WTC11 (cell line): ENCODE measurements at regions of chr20 and their contacts with region 1.

Region 1: GRCh38 chr20:58850693-58851174 is at the start of gene GNAS-AS1:
- DNase-seq: peak; percentile 95
- ATAC-seq: peak; percentile 60
- H3K4me3 Mint-ChIP-seq: peak within 1 kb of the TSS; percentile 74
- H3K27ac Mint-ChIP-seq: peak within 1 kb of the TSS; percentile 94
- H3K4me1 Mint-ChIP-seq: peaks cover 72% of the 10 kb centered on the region
- H3K27me3 Mint-ChIP-seq: peaks cover 48% of the 10 kb centered on the region
- CTCF ChIP-seq: no peak; the same call in 1 of the 2 replicates
- total RNA-seq, gene GNAS-AS1: 12.2 to 13.4 TPM (median 12.8 TPM) in 3 replicates

Region 2: DNA sequence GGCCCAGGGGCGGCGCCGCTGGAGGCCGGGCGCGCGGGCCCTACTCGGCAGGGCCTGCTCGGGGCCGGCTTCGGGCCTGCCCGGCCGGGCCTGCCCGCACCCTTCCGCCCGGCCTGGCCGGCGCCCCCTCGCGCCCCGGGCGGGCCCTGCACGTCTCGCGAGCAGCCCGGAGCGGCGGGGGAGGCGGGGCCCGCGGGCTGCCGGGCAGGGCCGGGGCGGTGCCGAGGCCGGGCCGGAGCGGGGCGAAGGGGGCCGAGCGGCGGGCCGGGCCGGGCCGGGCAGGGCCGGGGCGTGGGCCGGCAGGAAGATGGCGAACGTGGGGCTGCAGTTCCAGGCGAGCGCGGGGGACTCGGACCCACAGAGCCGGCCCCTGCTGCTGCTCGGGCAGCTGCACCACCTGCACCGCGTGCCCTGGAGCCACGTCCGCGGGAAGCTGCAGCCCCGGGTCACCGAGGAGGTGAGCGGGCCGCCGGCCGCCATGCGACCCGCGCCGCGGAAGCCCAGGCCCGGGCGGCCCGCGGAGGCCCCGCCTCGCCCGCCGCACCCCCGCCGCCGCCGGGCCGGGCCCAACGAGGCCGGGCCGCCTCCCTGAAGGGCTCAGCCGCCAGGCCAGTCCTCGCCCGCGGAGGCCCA is 158.0 kb before region 1 on chr20 and contains the start of gene NPEPL1:
- CTCF ChIA-PET with region 1: interaction called, 10 read pairs
- POLR2A ChIA-PET with region 1: no interaction called
- DNase-seq: peak; percentile 58
- ATAC-seq: peak; percentile 79
- H3K4me3 Mint-ChIP-seq: peak within 1 kb of the TSS; percentile 58
- H3K27ac Mint-ChIP-seq: peak within 1 kb of the TSS; percentile 96
- H3K4me1 Mint-ChIP-seq: peaks cover 41% of the 10 kb centered on the region
- H3K27me3 Mint-ChIP-seq: no peaks in the 10 kb centered on the region
- CTCF ChIP-seq: no peak
- total RNA-seq, gene NPEPL1: 35.3 to 39.9 TPM (median 35.8 TPM) in 3 replicates

Region 3: GRCh38 chr20:58762120-58762519 is 88.6 kb before region 1 on chr20:
- CTCF ChIA-PET with region 1: no interaction called
- POLR2A ChIA-PET with region 1: no interaction called
- DNase-seq: no peak
- ATAC-seq: no peak
- H3K4me3 Mint-ChIP-seq: no peak overlapping the region
- H3K27ac Mint-ChIP-seq: no peak overlapping the region
- H3K4me1 Mint-ChIP-seq: no peaks in the 10 kb centered on the region
- H3K27me3 Mint-ChIP-seq: peaks cover 11% of the 10 kb centered on the region
- CTCF ChIP-seq: no peak

Region 4: DNA sequence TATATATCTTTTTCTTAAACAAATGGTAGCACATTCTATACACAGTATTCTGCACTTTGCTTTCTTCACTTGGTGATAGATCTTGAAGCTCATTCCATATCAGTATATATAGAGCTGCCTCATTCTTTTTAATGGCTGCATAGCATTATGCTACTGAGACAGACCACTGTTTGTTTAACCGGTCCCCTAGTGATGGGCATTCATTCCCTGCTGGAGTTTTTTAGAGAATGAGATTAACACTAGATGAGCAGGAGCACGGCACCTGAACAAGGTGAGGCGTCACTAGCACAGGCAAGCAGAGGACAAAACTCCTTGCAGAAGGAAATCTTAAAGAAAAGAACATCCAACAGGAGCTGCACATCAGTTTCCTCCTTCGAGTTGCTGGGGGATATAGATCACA is 69.6 kb before region 1 on chr20:
- CTCF ChIA-PET with region 1: no interaction called
- POLR2A ChIA-PET with region 1: no interaction called
- DNase-seq: no peak
- ATAC-seq: peak; percentile 24; the same call in 1 of the 2 replicates
- H3K4me3 Mint-ChIP-seq: no peak overlapping the region
- H3K27ac Mint-ChIP-seq: no peak overlapping the region
- H3K4me1 Mint-ChIP-seq: peaks cover 25% of the 10 kb centered on the region
- H3K27me3 Mint-ChIP-seq: peaks cover 23% of the 10 kb centered on the region
- CTCF ChIP-seq: no peak

Region 5: DNA sequence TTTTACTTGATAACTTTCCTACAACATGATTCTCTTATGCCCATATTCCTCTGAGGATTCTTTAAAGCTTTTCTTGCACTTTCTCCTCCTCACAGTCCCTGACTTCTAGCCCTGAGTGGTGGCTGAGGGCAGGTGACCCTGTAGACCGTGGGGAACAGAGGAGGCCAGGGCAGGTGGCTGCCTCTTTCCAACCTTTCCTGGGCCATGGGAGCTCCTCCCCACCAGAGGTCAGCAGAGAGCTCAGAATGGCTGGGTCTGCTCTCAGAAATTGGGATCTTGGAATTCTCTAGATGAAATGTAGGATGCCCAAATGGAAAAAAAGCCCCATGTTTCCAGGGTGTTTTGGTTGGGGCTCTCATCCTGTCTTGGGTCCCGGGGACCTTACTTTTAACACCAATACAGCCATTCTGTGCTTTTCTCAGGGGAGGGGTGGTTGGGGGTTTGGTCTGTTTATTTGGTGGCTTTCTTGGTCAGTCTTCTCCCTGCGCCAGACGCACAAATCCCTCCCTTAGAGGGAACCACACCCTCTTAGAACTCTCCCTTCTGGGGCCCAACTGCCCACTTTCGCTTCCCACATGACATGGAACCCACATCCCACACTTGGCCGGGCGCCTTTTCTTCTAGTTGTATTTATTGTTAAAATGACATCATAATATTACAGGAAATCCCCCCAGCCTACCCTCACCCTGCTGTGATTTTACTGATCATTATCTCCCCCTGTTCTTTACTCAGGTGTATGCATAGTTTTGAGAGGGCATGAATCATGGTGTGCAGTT is 19.7 kb after region 1 on chr20:
- CTCF ChIA-PET with region 1: interaction called, 13 read pairs
- POLR2A ChIA-PET with region 1: interaction called, 3 read pairs
- DNase-seq: peak; percentile 83
- ATAC-seq: peak; percentile 91
- H3K4me3 Mint-ChIP-seq: no peak overlapping the region
- H3K27ac Mint-ChIP-seq: no peak overlapping the region
- H3K4me1 Mint-ChIP-seq: peaks cover 32% of the 10 kb centered on the region
- H3K27me3 Mint-ChIP-seq: no peaks in the 10 kb centered on the region
- CTCF ChIP-seq: peak; percentile 76

Region 6: GRCh38 chr20:58875541-58876134 is 24.9 kb after region 1 on chr20:
- CTCF ChIA-PET with region 1: interaction called, 13 read pairs
- POLR2A ChIA-PET with region 1: interaction called, 3 read pairs
- DNase-seq: no peak
- ATAC-seq: no peak
- H3K4me3 Mint-ChIP-seq: no peak overlapping the region
- H3K27ac Mint-ChIP-seq: no peak overlapping the region
- H3K4me1 Mint-ChIP-seq: peaks cover 58% of the 10 kb centered on the region
- H3K27me3 Mint-ChIP-seq: no peaks in the 10 kb centered on the region
- CTCF ChIP-seq: no peak

Region 7: GRCh38 chr20:59074445-59074844 is 223.7 kb after region 1 on chr20:
- CTCF ChIA-PET with region 1: no interaction called
- POLR2A ChIA-PET with region 1: no interaction called
- DNase-seq: no peak
- ATAC-seq: no peak
- H3K4me3 Mint-ChIP-seq: no peak overlapping the region
- H3K27ac Mint-ChIP-seq: no peak overlapping the region
- H3K4me1 Mint-ChIP-seq: peaks cover 3% of the 10 kb centered on the region; the same call in 1 of the 2 replicates
- H3K27me3 Mint-ChIP-seq: peaks cover 23% of the 10 kb centered on the region
- CTCF ChIP-seq: no peak